SK-N-SH (cell line): ENCODE measurements at regions of chr5 and their contacts with region 1.

Region 1: DNA sequence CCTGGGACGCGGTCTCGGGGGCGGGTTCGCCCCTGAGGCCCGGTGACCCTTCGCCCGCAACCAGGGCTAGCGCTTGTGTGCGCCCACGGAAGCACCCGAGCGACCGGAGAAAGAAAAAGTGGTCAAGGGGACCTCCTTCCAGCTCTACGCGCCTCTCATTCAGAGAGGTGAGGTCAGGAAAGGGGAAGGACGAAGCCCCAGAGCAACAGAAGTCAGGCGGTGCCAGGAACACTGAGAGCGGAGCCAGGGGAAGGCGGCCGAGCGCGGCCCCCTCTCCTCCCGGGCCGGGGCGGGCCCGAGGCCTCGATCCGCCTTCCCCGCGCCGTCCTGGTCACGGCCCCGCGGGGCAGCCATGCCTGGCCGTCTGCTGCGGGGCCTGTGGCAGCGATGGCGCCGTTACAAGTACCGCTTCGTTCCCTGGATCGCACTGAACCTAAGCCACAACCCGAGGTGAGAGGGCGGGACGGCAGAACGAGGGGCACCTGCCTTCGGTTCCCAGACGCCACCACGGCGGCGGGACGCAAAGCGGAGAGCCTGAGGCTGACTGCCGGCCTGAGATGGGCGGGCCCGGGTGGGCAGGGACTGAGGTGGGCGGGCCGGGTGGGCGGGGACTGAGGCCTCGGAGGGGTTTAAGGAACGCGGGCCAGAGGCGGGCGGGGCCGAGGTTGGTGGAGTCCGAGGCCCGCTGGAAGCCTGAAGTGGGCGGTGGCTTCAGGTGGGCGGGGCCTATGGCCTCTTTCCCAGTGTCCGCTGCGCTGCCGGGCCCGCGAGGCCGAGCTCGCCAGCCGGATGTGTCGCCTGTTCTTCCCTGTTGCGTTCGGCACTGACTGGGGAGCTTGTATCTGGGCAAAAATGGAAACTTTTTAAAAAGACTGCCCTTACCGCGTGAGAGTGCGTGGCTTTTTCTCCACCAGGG is at the start of gene SETD9:
- DNase-seq: peak; percentile 98
- H3K4me3 ChIP-seq: peak within 1 kb of the TSS; percentile 77 to 82
- H3K27ac ChIP-seq: peak within 1 kb of the TSS; percentile 95 to 98
- H3K4me1 ChIP-seq: peaks cover 0 to 10% of the 10 kb centered on the region in 2 experiments; a peak in 2 of 4 replicates
- H3K27me3 ChIP-seq: no peaks in the 10 kb centered on the region
- CTCF ChIP-seq: no peak
- EP300 ChIP-seq: no peak; a peak in 1 of 4 replicates
- RAD21 ChIP-seq: no peak; the same call in 1 of the 2 replicates
- polyA plus RNA-seq, gene SETD9: 12.2 and 16.8 TPM in 2 replicates

Region 2: DNA sequence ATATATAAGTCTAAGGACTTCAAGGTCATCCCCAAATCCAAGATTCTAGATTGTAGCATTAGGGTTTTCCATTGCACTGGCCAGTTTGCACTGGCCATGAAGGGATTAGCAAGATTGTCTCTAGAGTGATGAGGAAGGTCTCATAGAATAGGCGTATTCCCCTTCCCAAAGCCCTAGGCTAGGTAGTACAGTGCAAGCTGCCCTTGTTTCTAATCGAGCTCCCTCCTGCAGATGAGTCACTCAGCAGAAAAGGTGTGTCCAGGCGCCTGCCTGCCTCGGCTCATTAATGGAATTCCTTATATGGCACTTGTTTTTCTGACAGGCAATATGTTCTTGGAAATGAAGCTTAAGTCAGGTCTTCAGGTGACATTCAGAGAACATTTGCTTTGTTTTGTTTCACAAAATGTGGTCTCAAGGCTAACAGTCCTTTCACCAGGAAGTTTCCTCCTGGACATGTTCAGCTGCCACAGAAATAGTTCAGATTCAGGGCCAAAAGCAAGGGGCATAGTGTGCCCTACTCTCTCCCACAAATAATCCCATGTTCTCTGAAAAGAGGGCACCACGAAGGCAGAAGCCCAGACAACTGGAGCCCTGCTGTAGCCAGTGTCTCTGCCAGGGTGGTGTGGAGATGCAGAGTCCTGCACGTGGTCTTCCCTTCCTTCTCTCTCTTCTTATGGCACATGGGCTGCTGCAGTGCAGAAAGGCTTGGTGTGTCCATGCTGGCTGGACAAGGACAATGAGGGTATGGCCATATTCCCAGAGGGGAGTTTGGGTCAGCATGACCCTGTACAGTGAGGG is 375.3 kb before region 1 on chr5:
- CTCF ChIA-PET with region 1: no interaction called
- POLR2A ChIA-PET with region 1: no interaction called
- DNase-seq: no peak
- H3K4me3 ChIP-seq: no peak overlapping the region
- H3K27ac ChIP-seq: no peak overlapping the region
- H3K4me1 ChIP-seq: no peaks in the 10 kb centered on the region; a peak in 1 of 4 replicates
- H3K27me3 ChIP-seq: no peaks in the 10 kb centered on the region
- CTCF ChIP-seq: no peak
- EP300 ChIP-seq: no peak
- RAD21 ChIP-seq: no peak

Region 3: GRCh38 chr5:56876327-56876726 is 33.2 kb before region 1 on chr5:
- CTCF ChIA-PET with region 1: no interaction called
- POLR2A ChIA-PET with region 1: no interaction called
- DNase-seq: no peak
- H3K4me3 ChIP-seq: no peak overlapping the region
- H3K27ac ChIP-seq: no peak overlapping the region; a peak in 1 of 4 replicates
- H3K4me1 ChIP-seq: no peaks in the 10 kb centered on the region; a peak in 2 of 4 replicates
- H3K27me3 ChIP-seq: no peaks in the 10 kb centered on the region
- CTCF ChIP-seq: no peak
- EP300 ChIP-seq: no peak
- RAD21 ChIP-seq: no peak

Region 4: GRCh38 chr5:56950626-56951125 is 41.1 kb after region 1 on chr5:
- CTCF ChIA-PET with region 1: no interaction called
- POLR2A ChIA-PET with region 1: interaction called, 14 read pairs
- DNase-seq: peak; percentile 62
- H3K4me3 ChIP-seq: peak overlapping the region; percentile 89 to 94
- H3K27ac ChIP-seq: peak overlapping the region; percentile 60 to 86; a peak in 3 of 4 replicates
- H3K4me1 ChIP-seq: peaks cover 8 to 11% of the 10 kb centered on the region in 2 experiments; a peak in 3 of 4 replicates
- H3K27me3 ChIP-seq: no peaks in the 10 kb centered on the region
- CTCF ChIP-seq: no peak
- EP300 ChIP-seq: no peak
- RAD21 ChIP-seq: no peak